ENCODE measurements at regions of chr5 and their contacts with region 1.

Region 1: DNA sequence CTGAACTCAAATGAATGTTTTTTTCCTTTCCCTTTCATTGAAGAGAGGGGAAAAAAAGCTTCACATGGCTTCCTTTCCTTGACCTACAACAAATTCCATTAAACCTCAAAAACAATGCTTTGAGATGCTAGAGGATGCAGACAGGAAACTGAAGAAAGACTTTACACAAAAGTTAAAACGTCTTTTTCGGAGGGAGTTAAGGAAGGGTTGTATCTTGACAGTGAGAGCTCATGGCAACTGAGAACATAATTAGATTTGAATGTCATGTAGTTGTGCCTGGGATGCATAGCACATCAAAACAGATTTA is 66.4 kb downstream of the EBF1 start:
- DNase-seq: no peak
- ATAC-seq: no peak
- H3K4me3 Mint-ChIP-seq: no peak overlapping the region
- H3K27ac Mint-ChIP-seq: no peak overlapping the region
- H3K4me1 Mint-ChIP-seq: peaks cover 73% of the 10 kb centered on the region
- H3K27me3 Mint-ChIP-seq: no peaks in the 10 kb centered on the region
- CTCF ChIP-seq: no peak

Region 2: GRCh38 chr5:158483281-158483860 is 549.9 kb before region 1 on chr5:
- CTCF ChIA-PET with region 1: no interaction called
- POLR2A ChIA-PET with region 1: no interaction called
- intact Hi-C with region 1: no loop called
- DNase-seq: no peak
- ATAC-seq: no peak
- H3K4me3 Mint-ChIP-seq: no peak overlapping the region
- H3K27ac Mint-ChIP-seq: no peak overlapping the region
- H3K4me1 Mint-ChIP-seq: no peaks in the 10 kb centered on the region
- H3K27me3 Mint-ChIP-seq: no peaks in the 10 kb centered on the region
- CTCF ChIP-seq: no peak

Region 3: GRCh38 chr5:158640593-158640980 is 392.7 kb before region 1 on chr5:
- CTCF ChIA-PET with region 1: no interaction called
- POLR2A ChIA-PET with region 1: no interaction called
- intact Hi-C with region 1: no loop called
- DNase-seq: no peak
- ATAC-seq: no peak
- H3K4me3 Mint-ChIP-seq: no peak overlapping the region
- H3K27ac Mint-ChIP-seq: no peak overlapping the region
- H3K4me1 Mint-ChIP-seq: peaks cover 18% of the 10 kb centered on the region
- H3K27me3 Mint-ChIP-seq: no peaks in the 10 kb centered on the region
- CTCF ChIP-seq: no peak

Region 4: DNA sequence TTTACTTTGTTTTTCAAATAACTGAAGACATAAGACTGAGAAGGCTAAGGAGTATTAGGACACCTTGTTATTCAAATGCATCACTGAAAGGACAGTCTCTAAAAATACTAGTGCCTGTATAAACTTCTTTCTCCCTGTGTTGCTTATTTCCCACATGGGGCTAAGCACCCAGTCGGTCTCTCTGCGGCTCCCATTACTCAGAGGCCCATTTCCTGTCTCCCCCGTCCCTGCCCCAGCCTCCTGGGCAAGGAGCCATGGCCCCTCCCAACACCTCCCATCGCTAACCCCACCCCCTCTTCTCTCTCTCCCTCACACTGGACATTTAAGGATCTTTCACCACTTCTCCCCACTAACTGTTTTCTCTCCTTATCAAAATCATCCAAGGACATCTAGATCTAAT is 15.5 kb before region 1 on chr5:
- CTCF ChIA-PET with region 1: no interaction called
- POLR2A ChIA-PET with region 1: no interaction called
- intact Hi-C with region 1: loop called (anchors 2 kb)
- DNase-seq: no peak
- ATAC-seq: no peak
- H3K4me3 Mint-ChIP-seq: peak overlapping the region; percentile 7
- H3K27ac Mint-ChIP-seq: no peak overlapping the region
- H3K4me1 Mint-ChIP-seq: peaks cover 79% of the 10 kb centered on the region
- H3K27me3 Mint-ChIP-seq: no peaks in the 10 kb centered on the region
- CTCF ChIP-seq: no peak

Region 5: GRCh38 chr5:159083548-159084452 is 50.5 kb after region 1 on chr5:
- CTCF ChIA-PET with region 1: no interaction called
- POLR2A ChIA-PET with region 1: no interaction called
- intact Hi-C with region 1: no loop called
- DNase-seq: no peak
- ATAC-seq: peak; percentile 93
- H3K4me3 Mint-ChIP-seq: peak overlapping the region; percentile 72
- H3K27ac Mint-ChIP-seq: peak overlapping the region; percentile 93
- H3K4me1 Mint-ChIP-seq: peaks cover 70% of the 10 kb centered on the region
- H3K27me3 Mint-ChIP-seq: no peaks in the 10 kb centered on the region
- CTCF ChIP-seq: no peak

Measured in activated B cell treated with CpG ODN at 0.5 μM for 24 hours (primary cell).